Thyroid gland (tissue), 4 donors: ENCODE measurements at regions of chr2 and their contacts with region 1.

Region 1: DNA sequence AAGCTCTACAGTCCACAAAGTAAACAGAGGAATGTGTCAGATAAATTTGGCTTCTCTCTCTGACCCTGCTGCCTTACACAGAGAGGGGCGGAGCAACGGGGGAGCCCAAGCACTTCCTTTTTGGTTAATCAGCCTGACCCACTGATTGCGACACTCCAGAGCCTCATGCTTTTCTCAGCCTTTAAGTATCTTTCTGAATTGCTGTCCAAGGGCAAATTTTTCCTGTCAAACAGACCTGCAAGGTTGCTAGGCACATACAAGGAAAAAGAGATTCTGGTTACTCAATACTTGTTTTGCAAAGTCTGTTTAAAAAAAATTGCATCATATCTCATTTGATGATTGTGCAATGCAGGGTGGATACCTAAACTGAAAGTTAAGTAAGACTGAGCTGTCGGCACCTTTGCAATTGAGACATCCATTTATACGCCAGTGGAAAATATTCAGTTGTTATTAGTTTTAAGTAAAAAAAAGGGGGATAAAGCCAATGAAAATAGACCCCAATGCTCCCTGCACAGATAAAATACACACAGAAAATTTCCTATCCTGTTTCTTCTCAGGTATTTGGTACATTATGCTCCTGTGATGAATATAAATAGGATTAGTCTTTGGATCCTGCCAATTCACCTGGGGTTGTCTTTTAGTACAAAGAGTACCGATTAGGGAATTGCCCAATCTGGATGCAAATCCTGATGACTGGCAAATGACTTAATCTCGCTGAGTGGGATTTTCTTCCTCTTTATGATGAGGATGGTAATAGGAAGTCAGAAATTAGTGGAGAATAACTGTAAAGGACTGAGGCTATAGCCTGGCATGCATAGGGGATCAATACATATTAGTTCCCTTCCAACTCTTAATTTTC is 260.2 kb upstream of the TRIB2 start:
- DNase-seq: peak; percentile 93 to 94
- H3K4me3 ChIP-seq: no peak overlapping the region
- H3K27ac ChIP-seq: peak overlapping the region; percentile 38 to 61 (median 53)
- H3K4me1 ChIP-seq: peaks cover 12 to 19% of the 10 kb centered on the region in 2 donors
- H3K27me3 ChIP-seq: no peaks in the 10 kb centered on the region
- CTCF ChIP-seq: no peak
- POLR2A ChIP-seq: no peak

Region 2: DNA sequence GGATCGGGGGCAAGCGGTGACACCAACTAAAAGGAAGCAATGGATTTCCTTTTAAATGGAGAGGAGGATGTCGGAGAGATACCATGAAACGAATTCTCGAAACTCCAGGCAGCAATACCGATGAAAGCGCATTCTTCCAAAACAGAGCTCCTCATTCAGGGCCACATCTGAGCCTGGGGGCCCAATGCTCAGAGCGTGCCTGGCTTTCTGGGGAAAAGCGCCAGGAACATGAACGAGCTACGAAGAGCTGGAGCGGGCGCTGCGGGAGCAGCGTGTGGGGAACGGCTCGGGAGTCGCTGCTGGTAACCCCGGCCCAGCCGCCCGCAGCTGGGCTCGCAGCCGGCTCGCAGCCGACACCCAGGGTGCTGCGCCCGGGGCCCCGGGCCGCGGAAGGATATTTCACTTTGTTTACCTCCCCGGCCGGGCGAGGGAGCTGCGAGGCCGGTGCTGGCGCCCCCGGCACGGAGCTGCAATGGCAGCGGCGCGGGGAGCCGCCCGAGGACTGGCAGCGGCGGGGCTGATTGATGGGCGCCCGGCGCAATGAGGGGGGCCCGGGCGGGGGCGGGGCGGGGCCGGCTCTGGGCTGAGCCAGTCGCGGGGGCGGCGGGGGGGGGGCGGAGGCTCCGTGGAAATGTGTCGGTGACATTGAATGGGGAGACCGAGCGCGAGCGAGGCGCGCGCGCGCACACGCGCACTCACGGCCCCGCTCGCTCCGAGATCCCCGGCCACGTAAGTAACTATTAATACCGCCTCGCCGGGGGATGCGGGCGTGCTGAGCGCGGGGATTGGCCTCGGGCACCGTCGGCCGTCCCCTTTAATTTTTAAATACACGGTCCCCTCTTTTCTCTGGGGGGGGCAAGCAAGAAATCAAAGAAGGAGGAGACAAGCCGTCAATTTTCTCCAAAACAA is 260.0 kb after region 1 on chr2 and contains the start of gene TRIB2:
- intact Hi-C with region 1: loop called (anchors 10 kb)
- DNase-seq: peak; percentile 90 to 91
- H3K4me3 ChIP-seq: peak within 1 kb of the TSS; percentile 38 to 74 (median 74)
- H3K27ac ChIP-seq: peak within 1 kb of the TSS; percentile 85 to 94 (median 91)
- H3K4me1 ChIP-seq: peaks cover 5 to 16% of the 10 kb centered on the region in 2 donors
- H3K27me3 ChIP-seq: no peaks in the 10 kb centered on the region
- CTCF ChIP-seq: no peak
- POLR2A ChIP-seq: peak in 1 of 2 donors; percentile 60
- total RNA-seq, gene TRIB2: 30.8 to 59.8 (median 37.1) TPM